ENCODE measurements at regions of chr18 and their contacts with region 1.

Region 1: GRCh38 chr18:80034068-80034851 is at the start of gene RBFA:
- DNase-seq: peak; percentile 99 to 100 (median 100)
- ATAC-seq: peak; percentile 77
- H3K4me3 ChIP-seq: peak within 1 kb of the TSS; percentile 87 to 89
- H3K4me3 Mint-ChIP-seq: peak within 1 kb of the TSS; percentile 92
- H3K27ac ChIP-seq: peak within 1 kb of the TSS; percentile 79 to 97
- H3K27ac Mint-ChIP-seq: peak within 1 kb of the TSS; percentile 95
- H3K4me1 ChIP-seq: peaks cover 19% of the 10 kb centered on the region
- H3K4me1 Mint-ChIP-seq: peaks cover 27% of the 10 kb centered on the region
- H3K27me3 ChIP-seq: no peaks in the 10 kb centered on the region
- H3K27me3 Mint-ChIP-seq: no peaks in the 10 kb centered on the region
- CTCF ChIP-seq: no peak
- total RNA-seq, gene RBFA: 10.4 to 11.9 TPM

Region 2: DNA sequence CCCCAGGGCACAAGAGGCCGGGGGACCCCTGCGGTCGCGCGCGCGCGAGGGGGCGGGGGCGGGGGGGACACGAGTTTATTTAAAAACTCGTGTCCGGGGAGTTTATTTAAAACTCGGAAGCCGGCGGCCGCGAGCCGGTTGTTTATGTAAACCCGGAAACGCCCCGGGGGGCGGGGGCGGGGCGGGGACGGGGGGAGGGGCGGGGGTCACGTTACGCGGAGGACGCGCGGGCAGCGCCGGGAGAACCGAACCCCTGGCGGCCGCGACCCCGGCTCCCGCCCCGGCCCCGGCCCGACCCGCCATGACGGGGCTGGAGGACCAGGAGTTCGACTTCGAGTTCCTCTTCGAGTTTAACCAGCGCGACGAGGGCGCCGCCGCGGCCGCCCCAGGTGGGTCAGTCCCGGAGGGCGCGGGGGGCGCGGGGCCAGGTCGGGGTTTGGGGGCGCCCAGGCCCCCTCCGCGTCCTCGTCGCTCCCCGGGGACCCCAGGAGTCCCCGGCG is 634.1 kb before region 1 on chr18:
- CTCF ChIA-PET with region 1: no interaction called
- POLR2A ChIA-PET with region 1: no interaction called
- intact Hi-C with region 1: loop called in 1 of 2 experiments (anchors 5 kb)
- DNase-seq: peak; percentile 43 to 80 (median 72)
- ATAC-seq: peak; percentile 33
- H3K4me3 ChIP-seq: peak overlapping the region; percentile 58 to 59
- H3K4me3 Mint-ChIP-seq: peak overlapping the region; percentile 87
- H3K27ac ChIP-seq: peak overlapping the region; percentile 53 to 59
- H3K27ac Mint-ChIP-seq: no peak overlapping the region
- H3K4me1 ChIP-seq: peaks cover 54% of the 10 kb centered on the region
- H3K4me1 Mint-ChIP-seq: peaks cover 47% of the 10 kb centered on the region
- H3K27me3 ChIP-seq: peaks cover 0 to 3% of the 10 kb centered on the region in 2 experiments
- H3K27me3 Mint-ChIP-seq: no peaks in the 10 kb centered on the region
- CTCF ChIP-seq: no peak

Region 3: DNA sequence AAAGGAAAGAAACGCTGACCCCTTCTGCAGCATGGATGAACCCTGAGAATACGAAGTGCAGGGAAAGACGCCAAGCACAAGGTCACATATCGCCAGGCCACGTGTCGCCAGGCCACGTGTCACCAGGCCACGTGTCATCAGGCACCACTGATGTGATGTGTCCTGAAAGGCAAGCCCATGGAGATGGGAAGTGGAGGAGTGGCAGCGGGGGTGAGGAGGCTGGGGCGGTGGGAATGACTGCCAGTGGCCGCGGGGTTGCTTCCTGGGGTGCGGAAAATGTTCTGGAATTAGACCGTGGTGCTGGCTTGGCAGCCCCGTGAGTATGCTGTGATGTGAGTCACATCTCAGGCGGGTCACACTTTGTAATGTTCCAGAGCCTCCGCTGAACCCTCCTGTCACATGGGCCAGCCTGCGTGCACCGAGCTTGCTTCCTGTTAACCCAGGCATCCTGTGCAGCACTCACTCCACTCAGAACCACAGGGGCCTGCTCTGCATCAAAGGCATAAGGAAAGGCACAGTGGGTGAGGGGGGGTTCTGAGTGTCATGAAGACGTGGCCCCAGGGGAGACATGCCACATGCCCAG is 121.8 kb before region 1 on chr18:
- CTCF ChIA-PET with region 1: no interaction called
- POLR2A ChIA-PET with region 1: no interaction called
- intact Hi-C with region 1: loop called in 1 of 2 experiments (anchors 5 kb)
- DNase-seq: peak in 8 of 9 experiments; percentile 39 to 82 (median 60)
- ATAC-seq: peak; percentile 74
- H3K4me3 ChIP-seq: no peak overlapping the region
- H3K4me3 Mint-ChIP-seq: peak overlapping the region; percentile 16
- H3K27ac ChIP-seq: peak overlapping the region; percentile 8 to 51
- H3K27ac Mint-ChIP-seq: peak overlapping the region; percentile 96
- H3K4me1 ChIP-seq: peaks cover 43% of the 10 kb centered on the region
- H3K4me1 Mint-ChIP-seq: peaks cover 33% of the 10 kb centered on the region
- H3K27me3 ChIP-seq: no peaks in the 10 kb centered on the region
- H3K27me3 Mint-ChIP-seq: no peaks in the 10 kb centered on the region
- CTCF ChIP-seq: no peak

Region 4: DNA sequence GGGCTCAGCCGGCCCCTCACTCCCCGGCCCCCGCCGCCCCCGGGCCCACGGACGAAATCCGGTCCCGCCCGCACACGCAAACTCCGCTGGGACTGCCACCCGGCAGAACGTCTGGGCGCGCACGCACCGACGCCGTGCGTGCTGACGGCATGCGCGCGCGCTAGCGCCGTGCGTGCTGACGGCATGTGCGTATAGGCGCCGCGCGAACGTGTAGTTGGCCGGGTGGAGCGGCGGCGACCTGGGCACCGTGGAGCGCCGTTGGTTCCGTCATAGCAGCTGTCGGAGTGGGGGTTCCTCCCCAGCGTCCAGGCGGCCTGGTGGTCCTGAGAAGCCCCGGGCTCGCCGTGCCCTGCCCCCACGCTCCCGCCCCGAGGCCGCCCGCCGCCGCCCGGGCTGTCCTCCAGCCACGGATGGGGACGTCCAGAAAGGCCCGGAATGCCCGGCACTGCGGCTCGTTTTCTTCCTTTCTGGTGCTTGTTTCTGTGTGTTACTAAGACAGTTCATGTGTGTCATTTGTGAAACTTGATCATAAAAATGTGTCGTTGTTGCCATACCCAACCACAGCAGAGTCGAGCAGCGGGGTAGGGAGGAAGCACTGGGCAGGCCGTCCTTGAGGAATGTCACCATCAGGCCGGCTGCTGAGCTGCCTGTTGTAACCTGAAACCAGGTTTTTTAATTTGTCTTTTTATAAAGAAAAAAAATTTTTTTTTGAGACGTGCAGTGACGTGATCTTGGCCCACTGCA is 45.6 kb before region 1 on chr18 and contains the start of gene TXNL4A:
- CTCF ChIA-PET with region 1: no interaction called
- POLR2A ChIA-PET with region 1: interaction called, 5 read pairs
- intact Hi-C with region 1: loop called (anchors 1 kb)
- DNase-seq: peak; percentile 67 to 95 (median 83)
- ATAC-seq: peak; percentile 95
- H3K4me3 ChIP-seq: peak within 1 kb of the TSS; percentile 74 to 97
- H3K4me3 Mint-ChIP-seq: peak within 1 kb of the TSS; percentile 90
- H3K27ac ChIP-seq: peak within 1 kb of the TSS; percentile 91 to 98
- H3K27ac Mint-ChIP-seq: peak within 1 kb of the TSS; percentile 96
- H3K4me1 ChIP-seq: peaks cover 40% of the 10 kb centered on the region
- H3K4me1 Mint-ChIP-seq: peaks cover 43% of the 10 kb centered on the region
- H3K27me3 ChIP-seq: no peaks in the 10 kb centered on the region
- H3K27me3 Mint-ChIP-seq: no peaks in the 10 kb centered on the region
- CTCF ChIP-seq: no peak
- total RNA-seq, gene TXNL4A: 62.0 to 69.0 TPM

Region 5: DNA sequence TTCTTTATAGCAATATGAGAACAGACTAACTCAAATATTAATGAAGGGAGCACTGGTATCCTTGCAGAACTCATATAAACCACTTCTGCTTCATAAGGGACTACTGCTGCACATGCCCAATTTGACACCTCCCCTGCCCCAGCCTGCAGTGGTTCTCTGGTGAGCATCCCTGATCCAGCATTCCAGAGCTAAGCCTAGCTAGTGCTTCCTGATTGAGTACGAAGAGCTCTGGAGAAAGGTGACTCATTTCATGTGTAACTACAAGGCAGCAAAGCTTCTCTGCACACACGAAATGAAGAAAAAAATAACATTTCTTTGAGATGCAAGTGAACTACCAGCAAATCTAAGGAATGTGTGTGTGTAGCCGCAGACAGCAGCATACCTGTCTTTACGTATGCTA is 52.0 kb after region 1 on chr18:
- CTCF ChIA-PET with region 1: no interaction called
- POLR2A ChIA-PET with region 1: no interaction called
- intact Hi-C with region 1: no loop called
- DNase-seq: no peak
- ATAC-seq: no peak
- H3K4me3 ChIP-seq: no peak overlapping the region
- H3K4me3 Mint-ChIP-seq: no peak overlapping the region
- H3K27ac ChIP-seq: no peak overlapping the region
- H3K27ac Mint-ChIP-seq: no peak overlapping the region
- H3K4me1 ChIP-seq: no peaks in the 10 kb centered on the region
- H3K4me1 Mint-ChIP-seq: no peaks in the 10 kb centered on the region
- H3K27me3 ChIP-seq: no peaks in the 10 kb centered on the region
- H3K27me3 Mint-ChIP-seq: peaks cover 7% of the 10 kb centered on the region
- CTCF ChIP-seq: no peak

Region 6: DNA sequence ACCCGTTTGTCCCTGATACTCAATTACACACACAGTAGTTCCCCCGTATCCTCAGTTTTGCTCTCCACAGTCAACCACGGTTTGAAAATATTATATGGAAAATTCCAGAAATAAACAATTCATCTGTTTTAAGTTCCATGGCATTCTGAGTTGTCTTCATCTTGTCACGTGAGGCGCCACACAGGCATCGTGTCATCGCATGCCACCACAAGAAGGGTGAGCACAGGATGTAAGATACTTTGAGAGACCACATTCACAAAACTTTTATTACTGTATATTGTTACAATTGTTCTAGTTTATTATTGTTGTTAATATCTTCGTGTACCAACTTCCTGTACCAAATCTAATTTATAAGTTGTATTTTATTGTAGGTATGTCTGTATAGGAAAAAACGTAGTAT is 92.5 kb after region 1 on chr18:
- CTCF ChIA-PET with region 1: no interaction called
- POLR2A ChIA-PET with region 1: interaction called, 3 read pairs
- intact Hi-C with region 1: loop called in 1 of 2 experiments (anchors 5 kb)
- DNase-seq: peak in 4 of 9 experiments; percentile 25 to 66 (median 47)
- ATAC-seq: peak; percentile 78
- H3K4me3 ChIP-seq: no peak overlapping the region
- H3K4me3 Mint-ChIP-seq: peak overlapping the region; percentile 23
- H3K27ac ChIP-seq: peak overlapping the region in 1 of 2 experiments; percentile 15
- H3K27ac Mint-ChIP-seq: peak overlapping the region; percentile 58
- H3K4me1 ChIP-seq: peaks cover 31% of the 10 kb centered on the region
- H3K4me1 Mint-ChIP-seq: peaks cover 61% of the 10 kb centered on the region
- H3K27me3 ChIP-seq: no peaks in the 10 kb centered on the region
- H3K27me3 Mint-ChIP-seq: no peaks in the 10 kb centered on the region
- CTCF ChIP-seq: no peak

Measured in CD8-positive, alpha-beta T cell (primary cell).